ENCODE measurements at regions of chr5 and their contacts with region 1.

Region 1: GRCh38 chr5:1763548-1763911 is 36.1 kb downstream of the MRPL36 start:
- DNase-seq: peak; percentile 71
- H3K4me3 Mint-ChIP-seq: no peak overlapping the region
- H3K27ac Mint-ChIP-seq: no peak overlapping the region
- H3K4me1 Mint-ChIP-seq: no peaks in the 10 kb centered on the region
- H3K27me3 Mint-ChIP-seq: no peaks in the 10 kb centered on the region
- CTCF ChIP-seq: peak; percentile 78

Region 2: GRCh38 chr5:2017540-2018389 is 254.2 kb after region 1 on chr5:
- CTCF ChIA-PET with region 1: no interaction called
- POLR2A ChIA-PET with region 1: no interaction called
- intact Hi-C with region 1: loop called (anchors 1 kb)
- DNase-seq: peak; percentile 59
- H3K4me3 Mint-ChIP-seq: no peak overlapping the region
- H3K27ac Mint-ChIP-seq: no peak overlapping the region
- H3K4me1 Mint-ChIP-seq: no peaks in the 10 kb centered on the region
- H3K27me3 Mint-ChIP-seq: no peaks in the 10 kb centered on the region
- CTCF ChIP-seq: peak; percentile 47

Region 3: GRCh38 chr5:2038321-2039179 is 275.0 kb after region 1 on chr5:
- CTCF ChIA-PET with region 1: interaction called, 3 read pairs
- POLR2A ChIA-PET with region 1: no interaction called
- intact Hi-C with region 1: loop called (anchors 2 kb)
- DNase-seq: peak; percentile 68
- H3K4me3 Mint-ChIP-seq: peak overlapping the region; percentile 71
- H3K27ac Mint-ChIP-seq: no peak overlapping the region
- H3K4me1 Mint-ChIP-seq: no peaks in the 10 kb centered on the region
- H3K27me3 Mint-ChIP-seq: peaks cover 27% of the 10 kb centered on the region
- CTCF ChIP-seq: peak; percentile 83